ENCODE measurements at regions of chr9 and their contacts with region 1.

Region 1: GRCh38 chr9:69421908-69422801 is 97.1 kb downstream of the ENTREP1 start:
- DNase-seq: peak; percentile 78
- CTCF ChIP-seq: peak; percentile 69

Region 2: GRCh38 chr9:69549310-69550202 is 127.4 kb after region 1 on chr9:
- in situ Hi-C with region 1: loop called (anchors 10 kb)
- DNase-seq: peak; percentile 49
- CTCF ChIP-seq: peak; percentile 53

Region 3: DNA sequence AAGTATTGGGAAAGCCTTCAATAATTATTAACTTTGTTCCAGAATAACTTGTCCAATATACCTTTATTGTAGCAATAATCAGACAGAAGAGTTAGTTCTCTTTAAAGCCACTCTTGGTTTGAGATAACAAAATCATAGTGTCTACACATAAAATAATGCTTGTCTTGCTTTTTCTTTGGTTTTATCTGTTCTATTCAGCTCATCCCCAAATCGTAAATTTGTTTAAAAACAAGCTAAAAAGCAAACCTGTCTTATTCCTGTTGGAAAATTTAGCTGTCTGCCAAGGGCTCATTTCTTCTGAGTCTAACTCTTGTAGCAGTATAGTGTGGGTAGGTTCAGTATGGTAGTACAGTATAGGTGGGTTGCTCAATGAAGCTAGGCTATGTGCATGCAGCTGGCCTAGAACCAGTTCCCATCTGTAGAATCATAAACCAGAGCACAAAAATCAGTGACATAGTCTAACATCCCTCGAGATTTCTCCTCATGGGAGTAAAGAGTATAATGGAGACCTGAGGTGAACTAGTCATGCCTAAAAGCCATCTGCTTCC is 267.9 kb after region 1 on chr9:
- in situ Hi-C with region 1: no loop called
- DNase-seq: no peak
- CTCF ChIP-seq: no peak

Region 4: GRCh38 chr9:69919461-69920061 is 497.4 kb after region 1 on chr9:
- in situ Hi-C with region 1: loop called (anchors 25 kb)
- DNase-seq: peak; percentile 67
- CTCF ChIP-seq: peak; percentile 45